GM12878 (cell line): ENCODE measurements at regions of chr1 and their contacts with region 1.

Region 1: DNA sequence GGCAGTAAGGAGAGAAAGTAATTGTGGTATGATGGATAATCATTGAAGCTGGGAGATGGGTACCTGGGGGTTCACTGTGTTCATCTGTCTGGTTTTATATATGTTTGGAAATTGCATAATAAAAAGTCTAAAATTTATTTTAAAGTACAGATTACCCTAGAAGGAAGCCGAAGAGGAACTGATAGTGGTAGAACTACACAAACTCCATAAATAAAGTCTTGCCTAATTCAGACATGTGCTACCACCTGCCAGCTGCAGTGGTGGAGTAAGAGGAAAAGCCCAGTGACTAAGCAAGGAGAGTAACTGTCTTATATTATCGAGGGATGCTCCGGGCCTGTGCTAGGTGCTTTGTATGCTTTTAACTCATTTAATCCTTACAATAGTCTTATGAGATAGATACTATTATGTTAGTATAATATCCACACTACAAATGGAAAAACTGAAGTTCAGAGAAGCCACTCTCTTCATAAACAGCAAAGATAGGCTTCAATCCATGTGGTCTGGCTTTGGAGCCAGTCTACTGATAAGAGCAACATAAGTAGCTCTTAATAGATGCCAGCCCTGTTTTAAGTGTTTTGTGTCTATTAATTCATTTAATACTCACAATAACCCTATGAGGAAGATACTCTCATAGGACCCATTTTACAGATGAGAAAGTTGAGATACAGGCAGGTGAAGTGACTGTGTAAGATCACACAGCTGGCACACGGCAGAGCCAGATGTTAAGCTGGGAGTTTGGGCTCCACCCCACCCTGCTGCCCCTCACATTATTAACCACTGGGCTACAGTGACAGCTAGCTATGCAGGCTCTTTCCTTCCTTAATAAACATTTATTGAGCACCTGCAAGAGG is 56.8 kb upstream of the HNRNPU start:
- DNase-seq: no peak
- ATAC-seq: peak; percentile 73
- H3K4me3 ChIP-seq: no peak overlapping the region
- H3K27ac ChIP-seq: peak overlapping the region; percentile 51
- H3K4me1 ChIP-seq: peaks cover 14% of the 10 kb centered on the region
- H3K27me3 ChIP-seq: no peaks in the 10 kb centered on the region
- CTCF ChIP-seq: no peak
- EP300 ChIP-seq: no peak
- POLR2A ChIP-seq: no peak
- RAD21 ChIP-seq: no peak

Region 2: DNA sequence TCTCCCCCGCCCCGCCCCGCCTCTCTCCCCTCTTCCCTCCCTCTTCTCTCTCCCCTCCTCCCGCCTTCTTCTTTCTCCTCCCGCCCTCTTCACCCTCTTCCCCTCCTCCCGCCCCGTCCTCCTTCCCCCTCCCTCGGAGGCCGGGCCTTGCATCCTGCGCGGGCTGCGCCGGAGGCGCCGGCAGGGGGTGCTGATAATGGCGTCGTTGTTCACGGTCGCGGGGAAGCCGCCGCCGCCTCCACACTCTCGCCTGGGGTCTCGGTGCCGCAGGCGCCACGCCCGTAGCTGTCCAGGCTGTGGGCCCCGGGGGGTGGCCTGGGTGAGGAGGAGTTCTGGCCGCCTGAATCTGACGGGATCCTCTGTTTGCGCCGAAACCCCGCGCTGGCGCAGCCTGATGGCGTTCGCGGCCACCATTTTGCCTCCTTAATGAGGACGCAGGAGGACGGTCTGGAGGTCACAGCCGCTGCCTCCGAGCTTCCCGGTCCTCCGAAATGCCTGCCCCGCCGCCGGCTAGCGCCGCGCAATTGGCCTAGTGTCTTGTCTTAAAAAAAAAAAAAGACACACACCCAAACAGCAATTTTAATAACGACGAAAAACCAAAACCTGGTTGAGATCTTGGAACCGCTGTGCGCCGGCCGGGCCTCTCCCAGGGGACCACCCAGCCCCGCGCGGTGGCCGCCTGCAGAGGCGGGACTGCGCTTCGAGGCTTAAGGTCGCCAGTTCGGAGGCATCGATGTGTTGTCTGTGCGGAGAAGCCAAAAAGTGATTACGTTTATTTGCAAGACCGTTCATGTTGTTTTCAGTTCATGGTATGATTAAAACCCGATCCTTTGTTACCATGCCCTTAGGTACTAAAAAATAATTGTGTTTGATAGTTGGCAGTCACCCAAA is 49.8 kb after region 1 on chr1:
- CTCF ChIA-PET with region 1: no interaction called
- POLR2A ChIA-PET with region 1: interaction called, 3 read pairs
- RAD21 ChIA-PET with region 1: interaction called, 3 read pairs
- SMC1A ChIA-PET with region 1: interaction called, 4 read pairs
- in situ Hi-C with region 1: no loop called
- intact Hi-C with region 1: loop called (anchors 2 kb)
- DNase-seq: peak; percentile 74
- ATAC-seq: peak; percentile 84
- H3K4me3 ChIP-seq: peak overlapping the region; percentile 58
- H3K27ac ChIP-seq: peak overlapping the region; percentile 98
- H3K4me1 ChIP-seq: no peaks in the 10 kb centered on the region
- H3K27me3 ChIP-seq: no peaks in the 10 kb centered on the region
- CTCF ChIP-seq: peak; percentile 48 to 61 (median 53)
- EP300 ChIP-seq: no peak
- POLR2A ChIP-seq: peak; percentile 90
- RAD21 ChIP-seq: peak; percentile 24; the same call in 1 of the 2 replicates

Region 3: DNA sequence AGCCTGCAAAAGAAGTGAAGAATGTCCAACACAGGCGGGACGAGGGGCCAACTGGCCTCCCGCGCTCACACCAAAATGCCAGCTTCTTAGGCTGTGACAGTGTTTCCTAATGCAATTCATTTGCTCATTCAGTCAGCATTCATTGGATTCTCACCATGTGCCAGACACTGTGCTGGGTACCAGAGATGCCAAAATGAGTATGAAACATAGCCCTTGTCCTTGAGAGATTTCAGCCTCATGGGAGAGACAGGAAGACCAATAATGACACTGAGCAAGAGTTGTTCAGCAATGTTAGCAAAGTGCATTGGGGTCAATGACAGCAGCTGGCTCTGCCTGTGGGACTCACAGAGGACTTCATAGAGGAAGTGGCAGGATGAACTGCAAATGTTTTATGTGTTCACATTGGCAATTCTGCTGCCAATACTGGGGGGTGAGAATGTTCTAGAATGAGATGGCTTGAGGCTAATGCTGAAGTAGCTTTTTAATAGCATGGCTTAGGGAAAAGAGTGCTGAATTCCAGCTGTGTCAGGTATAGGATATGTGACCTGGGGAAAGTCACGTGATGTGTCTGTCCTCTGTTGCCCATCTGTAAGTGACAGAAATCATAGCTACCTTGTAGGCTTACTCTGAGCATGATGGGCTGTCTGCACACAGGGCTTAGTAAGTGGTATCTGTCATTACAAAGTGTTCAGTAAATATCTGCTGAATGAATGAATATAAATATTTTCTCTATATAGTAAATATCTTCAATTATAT is 175.4 kb after region 1 on chr1:
- CTCF ChIA-PET with region 1: no interaction called
- POLR2A ChIA-PET with region 1: no interaction called
- RAD21 ChIA-PET with region 1: no interaction called
- SMC1A ChIA-PET with region 1: no interaction called
- in situ Hi-C with region 1: no loop called
- intact Hi-C with region 1: no loop called
- DNase-seq: no peak
- ATAC-seq: no peak
- H3K4me3 ChIP-seq: no peak overlapping the region
- H3K27ac ChIP-seq: no peak overlapping the region
- H3K4me1 ChIP-seq: no peaks in the 10 kb centered on the region
- H3K27me3 ChIP-seq: no peaks in the 10 kb centered on the region; a peak in 1 of 4 replicates
- CTCF ChIP-seq: no peak
- EP300 ChIP-seq: no peak
- POLR2A ChIP-seq: no peak
- RAD21 ChIP-seq: no peak